ENCODE measurements at regions of chr7 and their contacts with region 1.

Region 1: GRCh38 chr7:87219545-87220025 is at the start of gene TMEM243:
- DNase-seq: peak; percentile 82 to 92 (median 88)
- ATAC-seq: peak; percentile 63 to 67
- H3K4me3 Mint-ChIP-seq: peak within 1 kb of the TSS; percentile 96 to 100 (median 99)
- H3K27ac Mint-ChIP-seq: peak within 1 kb of the TSS; percentile 98 to 99 (median 99)
- H3K4me1 Mint-ChIP-seq: peaks cover 26 to 52% (median 41%) of the 10 kb centered on the region in 4 donors
- H3K27me3 Mint-ChIP-seq: peaks cover 0 to 2% (median 0%) of the 10 kb centered on the region in 5 donors
- polyA plus RNA-seq, gene TMEM243: 79.3 to 89.5 (median 82.0) TPM

Region 2: GRCh38 chr7:87152107-87152844 is 67.3 kb before region 1 on chr7 and contains the start of gene DMTF1:
- POLR2A ChIA-PET with region 1: interaction called, 136 read pairs
- DNase-seq: peak; percentile 76 to 92 (median 85)
- ATAC-seq: peak; percentile 80 to 82
- H3K4me3 Mint-ChIP-seq: peak within 1 kb of the TSS; percentile 92 to 98 (median 94)
- H3K27ac Mint-ChIP-seq: peak within 1 kb of the TSS; percentile 93 to 100 (median 99)
- H3K4me1 Mint-ChIP-seq: peaks cover 23 to 51% (median 44%) of the 10 kb centered on the region in 4 donors
- H3K27me3 Mint-ChIP-seq: no peaks in the 10 kb centered on the region
- polyA plus RNA-seq, gene DMTF1: 22.2 to 33.5 (median 23.2) TPM

Region 3: DNA sequence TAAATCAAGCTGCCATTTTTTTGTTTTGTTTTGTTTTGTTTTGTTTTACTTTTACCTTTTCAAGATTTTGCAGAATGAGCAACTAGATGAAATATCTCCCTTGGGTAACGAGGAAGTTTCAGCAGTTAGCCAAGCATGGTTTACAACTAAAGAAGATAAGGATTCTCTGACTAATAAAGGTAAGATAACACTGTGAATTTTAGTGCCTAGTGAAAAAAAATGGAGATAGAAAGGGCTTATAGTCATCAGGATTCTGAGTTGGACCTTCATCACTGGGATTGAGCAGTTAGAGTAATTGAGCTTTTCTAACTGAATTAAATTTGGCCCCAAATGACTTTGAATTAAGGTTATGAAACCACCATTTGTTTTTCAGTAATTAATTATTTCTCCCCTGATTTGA is 46.1 kb before region 1 on chr7:
- POLR2A ChIA-PET with region 1: interaction called, 12 read pairs
- DNase-seq: no peak
- ATAC-seq: no peak
- H3K4me3 Mint-ChIP-seq: no peak overlapping the region
- H3K27ac Mint-ChIP-seq: peak overlapping the region in 7 of 10 donors; percentile 7 to 66 (median 50)
- H3K4me1 Mint-ChIP-seq: peaks cover 21 to 45% (median 32%) of the 10 kb centered on the region in 4 donors
- H3K27me3 Mint-ChIP-seq: no peaks in the 10 kb centered on the region

Region 4: DNA sequence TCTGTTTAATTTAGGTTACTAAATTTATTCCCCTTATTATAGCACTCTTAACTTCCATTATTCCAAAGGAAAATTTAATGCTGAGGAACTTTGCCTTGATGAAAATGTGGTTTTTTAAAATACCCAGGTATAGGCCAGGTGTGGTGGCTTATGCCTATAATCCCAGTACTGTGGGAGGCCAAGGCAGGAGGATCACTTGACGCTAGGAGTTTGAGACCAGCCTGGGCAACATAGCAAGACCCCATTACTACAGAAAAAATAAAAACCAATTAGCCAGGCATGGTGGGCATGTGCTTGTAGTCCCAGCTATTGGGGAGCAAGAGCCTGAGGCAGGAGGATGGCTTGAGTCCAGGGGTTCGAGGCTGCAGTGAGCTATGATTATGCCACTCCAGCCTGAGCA is 32.5 kb before region 1 on chr7:
- POLR2A ChIA-PET with region 1: interaction called, 16 read pairs
- DNase-seq: no peak
- ATAC-seq: no peak
- H3K4me3 Mint-ChIP-seq: no peak overlapping the region
- H3K27ac Mint-ChIP-seq: peak overlapping the region in 4 of 10 donors; percentile 35 to 60 (median 58)
- H3K4me1 Mint-ChIP-seq: peaks cover 14 to 27% (median 19%) of the 10 kb centered on the region in 4 donors
- H3K27me3 Mint-ChIP-seq: no peaks in the 10 kb centered on the region

Region 5: GRCh38 chr7:87192784-87193487 is 26.6 kb before region 1 on chr7:
- POLR2A ChIA-PET with region 1: interaction called, 50 read pairs
- DNase-seq: no peak
- ATAC-seq: peak; percentile 14 to 24
- H3K4me3 Mint-ChIP-seq: no peak overlapping the region
- H3K27ac Mint-ChIP-seq: peak overlapping the region; percentile 10 to 87 (median 74)
- H3K4me1 Mint-ChIP-seq: peaks cover 22 to 45% (median 37%) of the 10 kb centered on the region in 4 donors
- H3K27me3 Mint-ChIP-seq: no peaks in the 10 kb centered on the region

Region 6: DNA sequence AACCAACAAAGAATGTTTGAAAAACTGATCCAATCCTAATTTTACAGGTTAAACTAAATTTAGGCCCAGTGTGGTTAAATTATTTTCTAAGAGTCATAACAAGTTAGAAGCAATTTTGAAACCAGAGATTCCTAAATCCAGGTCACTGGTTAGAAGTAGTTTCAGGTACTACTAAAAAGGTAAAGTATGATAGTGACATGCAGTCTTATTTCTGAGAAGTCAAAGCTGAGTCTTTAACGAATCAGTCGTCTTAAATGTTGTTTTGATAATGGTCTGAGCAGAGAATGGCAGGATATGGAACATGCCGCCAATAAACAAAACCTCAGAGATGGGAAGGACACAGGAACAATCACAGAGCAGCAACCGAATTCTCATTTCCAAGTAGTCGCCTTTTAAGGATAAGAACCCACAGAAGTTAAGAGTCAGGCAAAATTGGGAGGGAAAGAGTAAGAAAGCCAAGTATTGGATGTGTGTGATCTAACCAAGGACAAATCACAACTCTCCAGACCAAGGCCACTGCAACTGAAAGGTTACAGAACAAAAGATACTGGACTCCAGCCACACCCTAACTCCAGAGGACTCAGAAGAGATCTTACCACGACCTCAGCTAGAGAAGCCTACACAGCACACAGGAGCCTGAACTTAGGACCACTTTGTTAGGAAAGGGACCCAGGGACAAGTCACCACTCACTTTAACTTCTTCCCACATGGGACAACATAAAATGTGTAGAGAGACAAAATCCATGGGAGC is 19.7 kb before region 1 on chr7:
- POLR2A ChIA-PET with region 1: interaction called, 50 read pairs
- DNase-seq: no peak
- ATAC-seq: no peak
- H3K4me3 Mint-ChIP-seq: peak overlapping the region in 3 of 10 donors; percentile 20 to 22 (median 21)
- H3K27ac Mint-ChIP-seq: peak overlapping the region; percentile 28 to 84 (median 70)
- H3K4me1 Mint-ChIP-seq: peaks cover 35 to 77% (median 68%) of the 10 kb centered on the region in 4 donors
- H3K27me3 Mint-ChIP-seq: no peaks in the 10 kb centered on the region

Region 7: DNA sequence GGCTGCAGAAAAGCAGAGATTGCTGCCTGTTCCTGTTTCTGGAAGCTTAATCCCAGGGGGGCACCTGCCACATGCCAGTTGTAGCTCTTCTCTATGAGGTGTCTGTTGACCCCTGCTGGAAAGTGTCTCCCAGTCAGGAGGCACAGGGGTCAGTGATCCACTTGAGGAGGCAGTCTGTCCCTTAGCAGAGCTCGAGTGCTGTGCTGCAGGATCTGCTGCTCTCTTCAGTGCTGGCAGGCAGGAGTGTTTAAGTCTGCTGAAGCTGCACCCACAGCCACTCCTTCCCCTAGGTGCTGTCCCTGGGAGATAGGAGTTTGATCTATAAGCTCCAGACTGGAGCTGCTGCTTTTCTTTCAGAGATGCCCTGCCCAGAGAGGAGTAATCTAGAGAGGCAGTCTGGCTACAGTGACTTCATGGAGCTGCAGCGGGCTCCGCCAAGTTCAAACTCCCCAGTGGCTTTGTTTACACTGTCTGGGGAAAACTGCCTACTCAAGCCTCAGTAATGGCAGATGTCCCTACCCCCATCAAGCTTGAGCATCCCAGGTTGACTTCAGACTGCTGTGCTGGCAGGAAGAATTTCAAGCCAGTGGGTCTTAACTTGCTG is 68.3 kb after region 1 on chr7:
- POLR2A ChIA-PET with region 1: no interaction called
- DNase-seq: no peak
- ATAC-seq: no peak
- H3K4me3 Mint-ChIP-seq: no peak overlapping the region
- H3K27ac Mint-ChIP-seq: no peak overlapping the region
- H3K4me1 Mint-ChIP-seq: no peaks in the 10 kb centered on the region
- H3K27me3 Mint-ChIP-seq: peaks cover 6 to 24% (median 7%) of the 10 kb centered on the region in 5 donors

Measured in naive thymus-derived CD8-positive, alpha-beta T cell (primary cell).